ENCODE measurements at regions of chr18 and their contacts with region 1.

Region 1: GRCh38 chr18:12726774-12727550 is 24.1 kb downstream of the PSMG2 start:
- DNase-seq: no peak
- H3K4me3 ChIP-seq: no peak overlapping the region
- H3K27ac ChIP-seq: no peak overlapping the region
- H3K4me1 ChIP-seq: no peaks in the 10 kb centered on the region
- H3K27me3 ChIP-seq: no peaks in the 10 kb centered on the region
- CTCF ChIP-seq: peak; percentile 76 to 91 (median 84)
- POLR2A ChIP-seq: no peak

Region 2: DNA sequence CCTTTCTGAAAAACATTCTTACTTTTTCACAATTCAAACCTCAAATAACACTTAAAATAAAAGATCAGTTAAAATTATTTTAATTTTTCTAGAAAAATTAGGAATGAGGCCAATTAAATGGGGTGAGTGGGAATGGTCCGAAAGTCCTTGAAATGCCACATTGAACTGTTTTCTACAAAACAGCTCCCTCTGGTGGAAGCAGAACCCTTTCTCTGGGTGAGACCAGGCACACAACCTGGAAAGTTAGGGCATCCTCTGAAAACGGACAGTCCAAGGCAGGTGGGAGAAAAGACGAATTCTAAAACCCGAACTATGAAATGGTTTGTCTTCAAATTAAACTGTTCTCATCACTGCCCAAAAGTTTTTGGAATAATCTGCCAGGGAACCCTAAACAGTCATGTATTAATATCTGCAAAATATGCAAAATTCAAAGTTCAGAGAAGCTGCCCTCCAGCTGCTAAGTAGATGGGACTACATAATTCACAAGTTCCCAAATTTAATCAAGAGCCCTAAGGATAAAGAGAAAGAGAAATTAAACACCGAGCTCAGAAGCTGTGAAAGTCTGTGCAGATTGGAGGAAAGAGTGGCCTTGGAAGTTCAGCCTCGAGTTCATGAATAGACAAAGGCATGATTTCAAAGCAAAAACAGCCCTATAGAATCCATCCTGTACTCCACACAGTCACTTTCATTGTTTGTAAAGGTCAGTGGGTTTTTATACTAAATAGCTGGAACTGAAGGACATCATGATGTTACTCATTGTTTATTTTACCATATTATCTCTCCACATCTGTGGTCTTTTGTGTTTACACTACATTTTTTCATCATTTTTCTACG is 1685.9 kb before region 1 on chr18:
- intact Hi-C with region 1: no loop called
- DNase-seq: no peak
- H3K4me3 ChIP-seq: no peak overlapping the region
- H3K27ac ChIP-seq: no peak overlapping the region
- H3K4me1 ChIP-seq: no peaks in the 10 kb centered on the region
- H3K27me3 ChIP-seq: no peaks in the 10 kb centered on the region
- CTCF ChIP-seq: peak; percentile 39 to 58 (median 40)
- POLR2A ChIP-seq: no peak

Region 3: GRCh38 chr18:12811191-12811950 is 84.4 kb after region 1 on chr18:
- intact Hi-C with region 1: no loop called
- DNase-seq: no peak
- H3K4me3 ChIP-seq: no peak overlapping the region
- H3K27ac ChIP-seq: peak overlapping the region in 1 of 2 donors; percentile 43
- H3K4me1 ChIP-seq: no peaks in the 10 kb centered on the region
- H3K27me3 ChIP-seq: no peaks in the 10 kb centered on the region
- CTCF ChIP-seq: no peak
- POLR2A ChIP-seq: no peak

Region 4: DNA sequence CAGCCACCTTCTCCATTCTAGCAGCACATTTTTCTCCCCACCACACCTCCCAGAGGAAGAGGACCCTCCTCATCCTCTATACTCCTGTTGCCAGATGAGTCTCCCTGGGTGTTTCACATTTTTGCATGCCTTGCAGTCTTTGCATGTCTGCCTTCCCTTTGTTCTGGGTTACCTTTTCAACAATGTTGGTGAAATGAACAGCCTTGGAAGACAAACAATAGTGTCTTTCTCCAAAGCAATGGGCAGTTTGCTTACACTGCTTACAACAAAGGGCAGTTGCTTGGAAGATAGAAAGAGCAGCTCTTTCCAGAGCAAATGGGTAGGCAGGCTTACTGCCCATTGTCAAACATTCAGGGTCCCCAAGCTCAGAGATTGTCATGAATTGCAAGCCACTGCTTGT is 206.4 kb after region 1 on chr18:
- intact Hi-C with region 1: loop called (anchors 1 kb)
- DNase-seq: no peak
- H3K4me3 ChIP-seq: no peak overlapping the region
- H3K27ac ChIP-seq: no peak overlapping the region
- H3K4me1 ChIP-seq: no peaks in the 10 kb centered on the region
- H3K27me3 ChIP-seq: no peaks in the 10 kb centered on the region
- CTCF ChIP-seq: no peak
- POLR2A ChIP-seq: no peak